ENCODE measurements at regions of chr10 and their contacts with region 1.

Region 1: GRCh38 chr10:88835096-88835909 is 16.3 kb downstream of the ANKRD22 start:
- DNase-seq: no peak
- H3K4me3 ChIP-seq: no peak overlapping the region
- CTCF ChIP-seq: peak; percentile 87

Region 2: GRCh38 chr10:88565072-88565471 is 270.2 kb before region 1 on chr10:
- CTCF ChIA-PET with region 1: interaction called, 67 read pairs
- POLR2A ChIA-PET with region 1: no interaction called
- DNase-seq: no peak
- H3K4me3 ChIP-seq: no peak overlapping the region
- CTCF ChIP-seq: peak; percentile 14

Region 3: DNA sequence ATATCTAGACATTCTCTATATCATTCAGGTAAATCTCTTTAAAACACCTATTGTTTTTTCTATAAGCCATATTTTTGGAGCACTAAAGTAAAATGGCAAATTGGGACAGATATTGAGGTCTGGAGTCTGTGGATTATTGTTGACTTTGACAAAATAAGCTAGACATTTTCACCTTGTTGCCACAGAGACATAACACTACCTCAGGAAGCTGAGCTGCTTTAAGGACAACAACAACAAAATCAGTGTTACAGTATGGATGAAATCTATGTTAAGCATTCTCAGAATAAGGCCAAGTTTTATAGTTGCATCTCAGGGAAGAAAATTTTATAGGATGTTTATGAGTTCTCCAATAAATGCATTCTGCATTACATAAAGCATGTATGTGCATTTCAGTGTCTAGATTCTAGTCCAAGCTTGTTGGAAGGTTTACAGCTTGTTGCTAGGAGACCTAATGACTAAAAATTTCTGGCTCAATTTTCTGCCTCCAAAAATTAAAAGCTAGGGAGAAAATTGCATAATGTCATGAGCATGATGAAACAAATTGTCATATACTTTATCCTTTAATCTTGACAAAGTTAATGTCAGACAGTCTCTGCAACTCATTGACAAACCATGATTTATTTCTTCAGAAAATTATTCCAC is 14.4 kb before region 1 on chr10:
- CTCF ChIA-PET with region 1: interaction called, 109 read pairs
- POLR2A ChIA-PET with region 1: no interaction called
- DNase-seq: peak; percentile 44
- H3K4me3 ChIP-seq: no peak overlapping the region
- CTCF ChIP-seq: no peak

Region 4: DNA sequence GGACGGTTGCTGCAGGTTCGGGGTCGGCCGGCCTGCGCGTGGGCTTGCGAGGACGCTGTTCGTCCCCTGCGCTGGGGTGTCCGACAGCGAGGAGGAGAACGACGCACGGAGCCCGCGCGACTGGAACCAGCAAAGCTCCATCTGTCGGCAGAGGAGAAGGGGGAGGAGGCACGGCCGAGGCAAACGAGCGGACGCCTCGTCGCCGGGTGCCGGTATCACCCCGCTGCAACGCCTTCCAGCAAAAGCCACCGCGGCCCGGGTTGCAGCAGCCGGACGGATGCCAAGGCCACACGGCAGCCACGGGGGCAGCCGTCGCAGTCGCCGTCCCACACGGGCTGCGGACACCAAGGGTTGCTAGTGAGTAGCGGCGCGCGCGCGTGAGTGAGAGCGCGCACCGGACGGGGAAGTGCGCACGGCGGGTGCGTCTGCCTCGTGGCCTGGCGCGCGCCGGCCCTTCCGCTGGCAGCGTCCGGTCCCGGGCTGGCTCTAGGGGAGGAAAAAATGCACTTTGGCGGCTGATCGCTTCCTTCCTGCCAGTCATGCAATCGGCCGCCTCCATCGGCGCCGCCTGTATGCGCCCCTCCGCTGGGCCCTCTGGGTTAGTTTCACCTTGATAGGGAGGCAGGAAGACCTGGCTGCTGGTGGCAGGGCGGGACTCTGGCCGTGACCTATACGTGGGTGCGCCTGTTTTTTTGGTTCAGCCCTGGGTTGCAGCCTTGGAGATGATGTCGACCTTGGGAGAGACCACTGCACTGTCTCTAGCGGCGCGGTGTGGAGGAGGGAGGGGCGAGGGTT is 45.2 kb after region 1 on chr10:
- CTCF ChIA-PET with region 1: interaction called, 20 read pairs
- POLR2A ChIA-PET with region 1: no interaction called
- DNase-seq: no peak
- H3K4me3 ChIP-seq: peak overlapping the region; percentile 77
- CTCF ChIP-seq: peak; percentile 48

Region 5: DNA sequence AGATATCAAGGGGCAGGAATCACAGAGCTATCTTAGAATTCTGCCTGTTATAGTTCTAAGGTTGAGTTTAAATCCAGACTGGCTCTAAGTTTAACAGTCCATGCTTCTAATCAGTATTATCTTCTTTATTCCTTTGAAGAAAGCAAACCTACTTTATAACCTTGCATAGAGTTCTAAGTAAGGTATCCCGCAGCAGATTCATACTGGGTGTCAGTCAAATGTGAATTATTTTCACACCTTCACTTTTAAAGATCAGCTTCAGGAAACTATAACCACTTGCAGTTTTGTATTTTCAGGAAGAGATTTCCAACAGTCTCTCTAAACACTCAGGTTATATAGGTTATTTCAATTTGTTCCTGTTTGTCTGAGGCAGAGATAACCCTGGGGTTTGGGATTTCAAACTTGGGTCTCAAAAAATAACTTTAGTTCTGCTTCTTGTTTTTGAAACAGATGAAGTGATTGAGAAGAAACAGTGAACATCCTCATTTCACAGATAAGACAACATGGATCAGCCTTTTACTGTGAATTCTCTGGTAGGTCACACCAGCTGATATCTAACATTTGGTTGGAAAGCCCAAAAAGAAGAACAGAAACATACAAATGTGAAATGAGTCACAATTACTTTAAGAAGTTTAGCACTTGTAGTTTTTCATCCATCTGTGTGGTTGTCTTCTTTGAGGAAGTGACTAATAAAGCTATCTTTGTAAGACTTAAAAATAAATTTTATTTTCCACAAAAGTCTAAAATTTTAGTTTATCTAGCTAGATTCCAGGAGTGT is 66.1 kb after region 1 on chr10:
- CTCF ChIA-PET with region 1: interaction called, 25 read pairs
- POLR2A ChIA-PET with region 1: no interaction called
- DNase-seq: no peak
- H3K4me3 ChIP-seq: no peak overlapping the region
- CTCF ChIP-seq: no peak

Region 6: DNA sequence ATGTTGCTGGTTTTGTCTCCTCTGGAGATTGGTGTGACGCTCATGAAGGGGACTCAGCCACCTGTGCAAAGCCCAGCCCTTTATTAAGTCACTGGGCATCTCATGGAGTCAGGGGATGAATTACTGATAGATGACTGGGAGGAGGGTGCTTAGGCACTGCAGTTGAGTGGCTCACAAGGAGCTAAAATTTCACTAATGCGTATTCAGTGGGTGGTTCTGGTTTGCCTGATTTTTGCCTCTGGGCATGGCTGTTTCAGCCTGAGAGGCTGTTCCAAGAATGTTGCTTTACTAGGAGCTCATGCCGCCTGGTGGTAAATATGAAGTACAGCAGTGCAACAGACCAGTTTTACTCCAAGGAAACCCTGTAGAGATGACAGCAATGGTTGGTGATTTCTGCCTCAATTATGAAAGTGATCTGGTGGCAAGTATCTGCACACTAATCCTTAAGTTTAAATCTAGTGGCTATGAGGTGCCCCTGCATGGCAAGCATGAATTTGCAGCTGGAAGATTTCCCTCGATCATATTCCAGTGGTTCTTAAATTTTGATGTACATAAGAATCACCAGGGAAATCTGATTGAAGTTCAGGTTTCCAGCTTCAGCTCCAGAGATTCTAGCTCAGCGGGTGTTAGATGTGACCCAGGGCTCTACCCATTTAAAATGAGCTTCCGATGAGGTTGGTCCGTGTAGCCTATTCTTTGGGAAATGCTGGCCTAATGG is 97.4 kb after region 1 on chr10:
- CTCF ChIA-PET with region 1: interaction called, 1,009 read pairs
- POLR2A ChIA-PET with region 1: interaction called, 21 read pairs
- DNase-seq: peak; percentile 67
- H3K4me3 ChIP-seq: no peak overlapping the region
- CTCF ChIP-seq: peak; percentile 74

Region 7: GRCh38 chr10:88990384-88991160 is 155.3 kb after region 1 on chr10 and contains the start of gene FAS:
- CTCF ChIA-PET with region 1: interaction called, 40 read pairs
- POLR2A ChIA-PET with region 1: no interaction called
- DNase-seq: no peak
- H3K4me3 ChIP-seq: peak within 1 kb of the TSS; percentile 77
- CTCF ChIP-seq: no peak

Region 8: GRCh38 chr10:89153971-89154370 is 318.7 kb after region 1 on chr10:
- CTCF ChIA-PET with region 1: no interaction called
- POLR2A ChIA-PET with region 1: no interaction called
- DNase-seq: no peak
- H3K4me3 ChIP-seq: no peak overlapping the region
- CTCF ChIP-seq: no peak